B cell (primary cell): ENCODE measurements at regions of chr11 and their contacts with region 1.

Region 1: DNA sequence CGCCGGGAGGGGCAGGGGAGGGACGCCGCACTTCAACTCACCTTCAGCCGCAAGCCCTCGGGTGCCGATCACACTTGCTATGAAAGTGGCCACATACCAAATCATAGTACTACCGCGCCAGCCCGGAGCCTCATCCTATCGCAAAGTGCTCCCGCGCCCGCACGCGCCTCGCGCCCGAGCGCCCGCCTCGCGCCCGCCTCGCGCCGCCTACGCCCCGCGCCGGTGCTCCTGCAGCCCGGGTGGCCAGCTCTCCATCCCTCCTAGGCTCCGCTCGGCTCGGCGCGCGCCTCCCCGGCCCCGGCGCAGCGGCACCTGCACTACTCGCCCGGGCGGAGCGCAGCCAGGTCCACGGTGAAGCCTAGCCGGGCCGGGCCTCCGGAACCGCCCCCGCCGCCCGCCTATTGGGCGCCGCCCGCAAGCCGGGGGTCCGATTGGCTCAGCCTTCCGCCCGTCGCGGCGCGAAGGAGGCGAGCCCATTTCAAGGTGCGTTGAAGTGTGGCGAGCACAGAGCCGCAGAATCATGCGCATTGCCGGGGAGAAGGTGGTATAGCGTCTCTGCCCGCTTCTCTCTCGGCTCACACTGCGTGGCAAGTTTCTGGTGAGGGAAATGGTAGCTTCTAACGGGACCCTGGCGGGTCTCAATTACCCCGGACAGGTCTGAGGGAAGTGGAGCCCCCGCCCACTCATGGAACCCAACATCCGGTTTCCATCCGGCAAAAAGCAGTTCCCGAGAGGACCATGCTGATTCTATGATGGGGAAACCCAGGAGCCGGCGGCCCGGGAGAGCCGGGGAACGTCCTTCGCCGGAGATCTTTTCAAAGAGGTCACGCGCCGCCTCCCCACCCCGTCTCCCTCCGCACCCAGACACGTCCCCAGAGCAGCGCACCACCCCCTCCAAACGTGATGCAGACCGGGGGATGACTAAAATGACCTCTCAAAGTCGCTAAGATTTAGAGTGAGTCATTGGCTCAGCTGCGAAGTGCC is at the start of gene IGSF9B:
- DNase-seq: peak; percentile 85
- ATAC-seq: peak; percentile 95
- H3K4me3 ChIP-seq: peak within 1 kb of the TSS in 4 of 5 experiments; percentile 9 to 61 (median 48)
- H3K4me3 Mint-ChIP-seq: peak within 1 kb of the TSS; percentile 85
- H3K27ac ChIP-seq: no peak within 1 kb of the TSS
- H3K27ac Mint-ChIP-seq: no peak within 1 kb of the TSS
- H3K4me1 ChIP-seq: peaks cover 7 to 16% of the 10 kb centered on the region in 2 donors
- H3K4me1 Mint-ChIP-seq: peaks cover 22% of the 10 kb centered on the region
- H3K27me3 ChIP-seq: peaks cover 0 to 43% (median 22%) of the 10 kb centered on the region in 4 experiments
- H3K27me3 Mint-ChIP-seq: peaks cover 47% of the 10 kb centered on the region
- CTCF ChIP-seq: no peak
- total RNA-seq, gene IGSF9B: 0.37 and 0.85 TPM in 2 replicates

Region 2: DNA sequence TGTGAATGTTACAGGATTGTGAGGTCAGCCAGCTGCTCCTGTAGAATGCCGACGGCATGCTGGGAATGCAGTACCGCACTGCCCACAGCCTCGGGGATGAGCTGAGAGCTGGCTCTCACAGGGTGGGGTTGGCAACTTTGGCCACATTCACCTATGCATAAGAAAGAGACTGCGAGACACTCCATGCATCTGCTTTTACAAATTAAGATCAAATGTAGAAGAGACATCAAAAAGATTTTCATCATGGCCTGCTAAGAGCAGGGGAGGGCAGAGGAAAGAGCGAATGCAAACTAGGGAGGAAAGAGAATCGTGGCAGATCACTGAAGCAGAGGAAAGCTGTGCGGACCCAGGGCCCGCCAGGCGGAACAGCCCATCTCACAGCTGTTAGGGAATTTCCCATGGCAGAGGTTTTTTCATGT is 61.9 kb before region 1 on chr11:
- CTCF ChIA-PET with region 1: no interaction called
- POLR2A ChIA-PET with region 1: no interaction called
- intact Hi-C with region 1: loop called (anchors 2 kb)
- DNase-seq: peak; percentile 42
- ATAC-seq: peak; percentile 77
- H3K4me3 ChIP-seq: no peak overlapping the region
- H3K4me3 Mint-ChIP-seq: peak overlapping the region; percentile 11
- H3K27ac ChIP-seq: peak overlapping the region in 1 of 2 donors; percentile 52
- H3K27ac Mint-ChIP-seq: no peak overlapping the region
- H3K4me1 ChIP-seq: peaks cover 7 to 17% of the 10 kb centered on the region in 2 donors
- H3K4me1 Mint-ChIP-seq: peaks cover 26% of the 10 kb centered on the region
- H3K27me3 ChIP-seq: no peaks in the 10 kb centered on the region
- H3K27me3 Mint-ChIP-seq: peaks cover 21% of the 10 kb centered on the region
- CTCF ChIP-seq: no peak

Region 3: DNA sequence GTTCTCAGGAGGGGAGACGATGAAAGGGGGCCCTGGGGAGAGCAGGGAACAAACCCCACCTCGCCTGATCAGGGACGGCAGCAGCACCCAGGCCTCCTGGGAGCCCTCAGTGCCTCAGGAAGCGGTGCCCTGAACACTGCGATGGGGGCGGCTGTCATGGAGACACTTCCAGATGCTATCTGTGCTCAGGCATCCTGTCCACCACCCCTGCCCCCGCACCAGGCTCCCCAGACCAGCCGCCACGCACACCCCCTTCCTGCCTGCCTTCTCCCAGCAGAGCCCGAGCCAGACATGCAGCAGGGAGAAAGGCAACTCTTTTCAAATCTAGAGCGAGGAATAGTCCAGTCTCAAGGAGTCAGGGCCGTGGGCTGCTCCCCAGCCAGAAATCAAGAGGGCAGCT is 20.8 kb before region 1 on chr11:
- CTCF ChIA-PET with region 1: no interaction called
- POLR2A ChIA-PET with region 1: no interaction called
- intact Hi-C with region 1: no loop called
- DNase-seq: no peak
- ATAC-seq: no peak
- H3K4me3 ChIP-seq: no peak overlapping the region
- H3K4me3 Mint-ChIP-seq: no peak overlapping the region
- H3K27ac ChIP-seq: no peak overlapping the region
- H3K27ac Mint-ChIP-seq: no peak overlapping the region
- H3K4me1 ChIP-seq: no peaks in the 10 kb centered on the region
- H3K4me1 Mint-ChIP-seq: no peaks in the 10 kb centered on the region
- H3K27me3 ChIP-seq: no peaks in the 10 kb centered on the region
- H3K27me3 Mint-ChIP-seq: no peaks in the 10 kb centered on the region
- CTCF ChIP-seq: no peak

Region 4: GRCh38 chr11:134068829-134069425 is 112.0 kb after region 1 on chr11 and contains the start of gene JAM3:
- CTCF ChIA-PET with region 1: no interaction called
- POLR2A ChIA-PET with region 1: no interaction called
- intact Hi-C with region 1: loop called (anchors 2 kb)
- DNase-seq: peak; percentile 98
- ATAC-seq: peak; percentile 85
- H3K4me3 ChIP-seq: peak within 1 kb of the TSS in 4 of 5 experiments; percentile 40 to 75 (median 66)
- H3K4me3 Mint-ChIP-seq: peak within 1 kb of the TSS; percentile 92
- H3K27ac ChIP-seq: peak within 1 kb of the TSS in 1 of 2 donors; percentile 78
- H3K27ac Mint-ChIP-seq: peak within 1 kb of the TSS; percentile 90
- H3K4me1 ChIP-seq: peaks cover 21 to 32% of the 10 kb centered on the region in 2 donors
- H3K4me1 Mint-ChIP-seq: peaks cover 42% of the 10 kb centered on the region
- H3K27me3 ChIP-seq: no peaks in the 10 kb centered on the region
- H3K27me3 Mint-ChIP-seq: peaks cover 13% of the 10 kb centered on the region
- CTCF ChIP-seq: no peak
- total RNA-seq, gene JAM3: 28.0 and 29.6 TPM in 2 replicates